Adrenal gland (tissue), 19 donors: ENCODE measurements at regions of chr1 and their contacts with region 1.

Region 1: GRCh38 chr1:14733048-14733778 is 134.7 kb downstream of the KAZN start:
- DNase-seq: no peak
- H3K4me3 ChIP-seq: no peak overlapping the region
- H3K27ac ChIP-seq: no peak overlapping the region
- H3K4me1 ChIP-seq: no peaks in the 10 kb centered on the region
- H3K27me3 ChIP-seq: peaks cover 4% of the 10 kb centered on the region
- CTCF ChIP-seq: no peak
- POLR2A ChIP-seq: no peak

Region 2: DNA sequence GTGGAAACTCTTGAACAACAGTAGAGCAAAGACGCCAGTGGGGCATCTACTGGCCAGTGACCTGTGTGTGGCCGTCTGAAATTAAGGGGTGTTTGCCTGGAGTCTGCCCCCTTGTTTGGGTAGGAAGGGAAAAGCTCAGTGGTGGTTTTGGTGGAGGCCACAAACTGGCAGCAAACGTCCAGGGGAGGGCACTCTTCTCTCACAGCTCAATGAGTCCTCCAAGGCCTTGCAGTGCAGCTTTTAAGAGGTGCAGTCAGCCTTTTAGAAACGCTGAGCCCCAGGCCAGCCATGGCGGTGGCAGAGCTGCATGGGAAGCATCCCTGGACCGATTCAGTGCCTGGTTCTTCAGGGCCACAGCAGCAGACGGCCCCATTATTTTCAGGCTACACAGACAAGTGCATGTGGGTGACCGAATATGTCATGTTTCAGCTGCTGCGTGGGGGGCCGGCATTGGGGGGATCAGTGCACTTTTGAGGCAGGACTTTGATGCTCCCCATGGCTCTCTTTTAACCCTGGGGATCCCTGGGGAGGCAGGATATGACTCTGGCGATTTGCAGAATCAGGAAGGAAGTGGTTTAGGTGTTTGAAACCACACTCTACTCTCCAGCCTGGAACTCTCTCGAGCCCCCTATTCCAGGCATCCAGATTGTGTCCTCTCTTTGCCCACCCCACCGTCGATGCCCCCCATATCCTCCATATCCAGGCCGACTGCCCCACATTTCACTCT is 619.2 kb before region 1 on chr1:
- intact Hi-C with region 1: loop called in 1 of 2 experiments (anchors 10 kb)
- DNase-seq: peak in 6 of 7 donors; percentile 24 to 70 (median 38)
- H3K4me3 ChIP-seq: no peak overlapping the region
- H3K27ac ChIP-seq: no peak overlapping the region
- H3K4me1 ChIP-seq: no peaks in the 10 kb centered on the region
- H3K27me3 ChIP-seq: no peaks in the 10 kb centered on the region
- CTCF ChIP-seq: peak; percentile 5 to 56 (median 42)
- POLR2A ChIP-seq: no peak

Region 3: GRCh38 chr1:14689996-14690615 is 43.1 kb before region 1 on chr1:
- intact Hi-C with region 1: no loop called
- DNase-seq: no peak
- H3K4me3 ChIP-seq: no peak overlapping the region
- H3K27ac ChIP-seq: no peak overlapping the region
- H3K4me1 ChIP-seq: no peaks in the 10 kb centered on the region
- H3K27me3 ChIP-seq: no peaks in the 10 kb centered on the region
- CTCF ChIP-seq: no peak
- POLR2A ChIP-seq: no peak